Endothelial cell of umbilical vein (primary cell): ENCODE measurements at regions of chr13 and their contacts with region 1.

Region 1: DNA sequence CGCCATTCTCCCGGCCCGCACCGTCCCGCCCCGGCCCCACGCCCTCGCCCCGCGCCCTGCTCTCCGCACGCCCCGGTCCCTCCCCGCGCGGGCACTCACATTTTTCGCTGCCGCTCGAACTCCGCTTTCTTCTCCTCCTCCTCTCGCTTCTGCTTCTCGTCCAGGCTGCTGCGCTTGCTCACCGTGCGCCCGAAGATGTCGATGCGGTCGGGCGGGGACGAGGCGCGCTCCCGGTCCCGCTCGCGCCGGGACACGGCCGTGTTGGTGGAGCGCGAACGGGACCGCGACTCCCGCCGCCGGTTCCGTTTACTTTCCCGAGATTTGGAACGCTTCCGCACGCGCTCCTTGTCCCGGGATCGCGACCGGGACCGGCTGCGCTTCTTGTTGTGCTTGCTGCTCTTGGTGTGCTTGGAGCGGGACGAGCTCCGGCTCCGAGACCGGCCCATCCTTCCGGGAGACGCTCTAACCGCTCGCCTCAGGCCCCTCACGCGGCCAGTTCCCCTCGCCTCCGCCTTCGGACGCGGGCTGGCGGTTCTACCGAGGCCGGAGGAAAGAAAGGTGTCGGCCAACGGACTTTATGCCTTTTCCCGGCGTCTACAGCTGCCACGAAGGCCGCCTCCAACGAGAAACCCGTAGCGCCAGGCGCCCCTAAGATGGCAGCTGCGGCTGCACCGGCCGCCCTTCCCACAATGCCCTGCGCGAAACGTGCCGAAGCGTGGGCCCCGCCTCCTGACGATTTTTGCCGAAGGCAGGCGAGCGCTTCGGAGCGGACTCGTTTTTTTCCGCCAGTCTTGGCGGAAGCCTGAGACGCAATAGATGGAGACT is at the start of gene ARGLU1:
- DNase-seq: peak; percentile 96
- H3K4me3 ChIP-seq: peak within 1 kb of the TSS; percentile 57 to 98 (median 79)
- H3K27ac ChIP-seq: peak within 1 kb of the TSS; percentile 85
- H3K4me1 ChIP-seq: peaks cover 26% of the 10 kb centered on the region
- H3K27me3 ChIP-seq: no peaks in the 10 kb centered on the region
- CTCF ChIP-seq: no peak
- POLR2A ChIP-seq: peak; percentile 92
- total RNA-seq, gene ARGLU1: 95.7 and 111 TPM in 2 replicates

Region 2: DNA sequence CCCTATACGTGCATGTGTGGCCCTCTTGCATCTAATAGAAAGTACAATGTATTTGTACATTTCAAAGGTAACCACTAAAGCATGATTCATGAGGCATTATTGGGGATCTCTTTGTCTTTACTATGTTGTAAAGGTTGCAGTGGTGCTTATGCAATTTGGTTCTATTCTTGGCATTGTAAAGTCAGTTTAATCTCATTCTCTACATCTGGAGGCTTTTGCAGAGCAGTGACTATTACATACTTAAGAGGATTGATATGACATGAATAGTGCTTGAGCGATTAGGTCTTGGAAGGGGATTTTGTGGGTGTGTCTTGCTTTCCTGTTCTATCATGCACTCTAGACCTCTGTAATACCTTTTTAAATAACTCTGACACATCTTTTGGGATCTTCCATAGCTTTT is 642.2 kb before region 1 on chr13:
- CTCF ChIA-PET with region 1: no interaction called
- POLR2A ChIA-PET with region 1: no interaction called
- dilution Hi-C with region 1: no loop called
- intact Hi-C with region 1: no loop called
- DNase-seq: no peak
- H3K4me3 ChIP-seq: no peak overlapping the region
- H3K27ac ChIP-seq: no peak overlapping the region
- H3K4me1 ChIP-seq: peaks cover under 1% of the 10 kb centered on the region
- H3K27me3 ChIP-seq: no peaks in the 10 kb centered on the region
- CTCF ChIP-seq: no peak
- POLR2A ChIP-seq: no peak

Region 3: GRCh38 chr13:106680796-106681472 is 113.2 kb after region 1 on chr13:
- CTCF ChIA-PET with region 1: no interaction called
- POLR2A ChIA-PET with region 1: no interaction called
- dilution Hi-C with region 1: no loop called
- intact Hi-C with region 1: loop called (anchors 5 kb)
- DNase-seq: peak; percentile 81
- H3K4me3 ChIP-seq: no peak overlapping the region
- H3K27ac ChIP-seq: peak overlapping the region; percentile 22
- H3K4me1 ChIP-seq: peaks cover 25% of the 10 kb centered on the region
- H3K27me3 ChIP-seq: no peaks in the 10 kb centered on the region
- CTCF ChIP-seq: no peak
- POLR2A ChIP-seq: no peak

Region 4: DNA sequence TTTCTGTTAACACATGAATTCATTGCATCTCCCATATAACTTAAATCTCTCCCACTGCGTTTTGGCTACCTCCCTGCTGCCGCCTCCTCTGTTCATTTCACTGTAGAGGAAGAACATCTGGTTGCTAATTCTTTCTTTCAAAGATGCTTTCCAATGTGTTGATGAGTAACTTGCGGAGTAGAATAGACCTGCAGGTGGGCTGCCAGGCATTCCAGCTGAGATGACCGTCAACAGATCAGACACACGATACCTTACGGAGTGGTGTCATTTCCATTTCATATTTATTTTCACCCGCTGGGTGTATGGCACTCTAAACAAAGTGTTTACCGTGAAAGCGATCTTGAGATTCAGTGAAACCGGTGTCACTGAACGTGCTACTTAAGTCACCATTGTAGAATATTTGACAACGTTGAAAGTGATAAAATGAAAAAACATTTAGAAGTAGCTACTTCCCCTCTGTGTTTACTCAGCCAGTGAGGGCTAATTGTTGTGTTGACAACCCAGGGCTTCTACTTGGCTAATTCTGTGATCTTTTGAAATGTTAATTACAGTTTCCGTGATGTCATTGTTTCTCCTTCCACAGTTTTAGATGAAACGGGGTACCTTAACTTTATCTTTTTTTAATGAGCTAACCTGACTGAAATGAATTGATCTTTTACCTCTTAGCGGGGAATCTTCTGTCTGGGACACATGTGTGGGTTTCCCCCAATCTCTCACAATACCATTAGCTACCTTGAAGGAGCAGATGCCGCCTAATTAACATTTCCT is 228.8 kb after region 1 on chr13:
- CTCF ChIA-PET with region 1: no interaction called
- POLR2A ChIA-PET with region 1: no interaction called
- dilution Hi-C with region 1: no loop called
- intact Hi-C with region 1: loop called (anchors 10 kb)
- DNase-seq: peak; percentile 16
- H3K4me3 ChIP-seq: peak overlapping the region in 2 of 3 experiments; percentile 16 to 22
- H3K27ac ChIP-seq: no peak overlapping the region
- H3K4me1 ChIP-seq: no peaks in the 10 kb centered on the region
- H3K27me3 ChIP-seq: peaks cover 0 to 4% of the 10 kb centered on the region in 2 experiments
- CTCF ChIP-seq: no peak
- POLR2A ChIP-seq: no peak